ENCODE measurements at regions of chr6 and their contacts with region 1.

Region 1: DNA sequence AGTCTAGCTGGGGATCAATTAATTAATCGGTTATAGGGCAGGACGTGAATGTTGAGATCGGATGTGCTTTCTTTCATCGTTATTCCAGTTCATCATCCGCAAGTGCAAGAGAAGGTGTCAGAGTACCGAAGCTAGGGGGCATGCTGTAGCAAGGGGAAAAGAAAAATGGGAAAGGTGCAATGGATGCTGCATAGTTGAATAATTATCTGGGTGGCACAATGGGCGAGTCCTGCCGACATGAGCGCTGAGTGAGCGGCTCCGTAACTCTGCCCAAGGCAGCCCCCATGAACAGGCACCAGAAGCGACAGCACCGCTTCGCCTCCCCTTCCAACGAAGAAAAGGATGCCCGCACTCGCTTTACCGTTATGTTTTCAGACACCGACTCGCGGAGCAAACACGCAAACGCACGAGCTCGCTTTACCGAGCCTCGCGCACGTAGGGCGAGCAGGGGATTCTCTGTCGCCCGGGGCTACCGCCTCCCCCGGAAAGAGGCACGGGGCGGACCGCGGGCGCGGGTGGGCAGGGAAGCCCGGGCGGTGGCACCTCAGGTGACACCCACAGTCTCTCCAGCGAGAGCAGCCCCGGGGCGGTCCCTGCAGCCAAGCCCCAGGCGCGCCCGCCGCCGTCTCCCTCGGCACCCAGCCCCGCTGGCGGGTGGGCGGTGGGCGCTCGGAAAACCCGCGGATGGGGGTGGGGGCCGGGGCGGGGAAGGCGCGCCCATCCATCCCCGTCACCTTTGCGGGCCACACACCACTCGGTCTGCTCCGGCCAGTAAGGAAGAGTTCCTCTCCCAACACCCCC is 670 bp downstream of the WASF1 start:
- DNase-seq: peak; percentile 50
- ATAC-seq: peak; percentile 26
- H3K4me3 ChIP-seq: peak overlapping the region; percentile 72
- H3K27ac ChIP-seq: no peak overlapping the region
- H3K4me1 ChIP-seq: peaks cover 33% of the 10 kb centered on the region
- H3K27me3 ChIP-seq: no peaks in the 10 kb centered on the region
- CTCF ChIP-seq: peak; percentile 66

Region 2: GRCh38 chr6:110140650-110141049 is 38.1 kb before region 1 on chr6:
- CTCF ChIA-PET with region 1: no interaction called
- POLR2A ChIA-PET with region 1: interaction called, 16 read pairs
- intact Hi-C with region 1: no loop called
- DNase-seq: peak; percentile 18
- ATAC-seq: peak; percentile 54; the same call in 1 of the 2 replicates
- H3K4me3 ChIP-seq: no peak overlapping the region
- H3K27ac ChIP-seq: no peak overlapping the region
- H3K4me1 ChIP-seq: no peaks in the 10 kb centered on the region
- H3K27me3 ChIP-seq: no peaks in the 10 kb centered on the region
- CTCF ChIP-seq: no peak

Region 3: GRCh38 chr6:110201151-110201884 is 22.5 kb after region 1 on chr6:
- CTCF ChIA-PET with region 1: no interaction called
- POLR2A ChIA-PET with region 1: no interaction called
- intact Hi-C with region 1: no loop called
- DNase-seq: no peak
- ATAC-seq: no peak
- H3K4me3 ChIP-seq: no peak overlapping the region
- H3K27ac ChIP-seq: no peak overlapping the region
- H3K4me1 ChIP-seq: no peaks in the 10 kb centered on the region
- H3K27me3 ChIP-seq: no peaks in the 10 kb centered on the region
- CTCF ChIP-seq: no peak

Region 4: GRCh38 chr6:110389689-110390382 is 211.0 kb after region 1 on chr6:
- CTCF ChIA-PET with region 1: no interaction called
- POLR2A ChIA-PET with region 1: no interaction called
- intact Hi-C with region 1: loop called (anchors 1 kb)
- DNase-seq: no peak
- ATAC-seq: peak; percentile 29; the same call in 1 of the 2 replicates
- H3K4me3 ChIP-seq: no peak overlapping the region
- H3K27ac ChIP-seq: no peak overlapping the region
- H3K4me1 ChIP-seq: no peaks in the 10 kb centered on the region
- H3K27me3 ChIP-seq: no peaks in the 10 kb centered on the region
- CTCF ChIP-seq: no peak

Measured in PC-3 (cell line).